Activated naive CD4-positive, alpha-beta T cell treated with anti-CD3 and anti-CD28 coated beads for 36 hours (primary cell): ENCODE measurements at regions of chr1 and their contacts with region 1.

Region 1: GRCh38 chr1:100423832-100424337 is 71.6 kb downstream of the CDC14A start:
- DNase-seq: no peak
- H3K4me3 Mint-ChIP-seq: peak overlapping the region; percentile 36
- H3K27ac Mint-ChIP-seq: peak overlapping the region; percentile 59
- H3K4me1 Mint-ChIP-seq: peaks cover 63% of the 10 kb centered on the region
- H3K27me3 Mint-ChIP-seq: no peaks in the 10 kb centered on the region

Region 2: DNA sequence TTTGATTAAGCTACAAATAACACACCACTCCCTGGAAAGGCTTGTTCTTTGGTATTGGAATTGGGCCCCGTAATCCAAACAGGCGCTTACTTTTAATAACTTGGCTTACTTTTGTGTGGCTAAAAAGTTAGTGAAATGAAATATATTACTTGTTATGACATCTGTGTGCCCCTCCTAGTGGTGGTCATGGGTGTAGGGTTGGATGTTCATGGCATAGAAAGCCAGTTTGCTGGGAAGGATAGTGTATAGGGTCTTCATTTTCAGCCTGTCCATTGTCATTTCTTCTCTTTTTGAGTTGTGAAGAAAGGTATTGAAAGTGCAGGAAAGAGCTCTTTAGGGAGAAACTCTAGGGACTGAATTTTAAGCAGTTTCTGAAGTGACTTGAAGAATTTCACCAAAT is 65.7 kb before region 1 on chr1:
- CTCF ChIA-PET with region 1: interaction called, 19 read pairs
- intact Hi-C with region 1: no loop called
- DNase-seq: peak; percentile 46
- H3K4me3 Mint-ChIP-seq: no peak overlapping the region
- H3K27ac Mint-ChIP-seq: no peak overlapping the region
- H3K4me1 Mint-ChIP-seq: peaks cover 81% of the 10 kb centered on the region
- H3K27me3 Mint-ChIP-seq: no peaks in the 10 kb centered on the region

Region 3: DNA sequence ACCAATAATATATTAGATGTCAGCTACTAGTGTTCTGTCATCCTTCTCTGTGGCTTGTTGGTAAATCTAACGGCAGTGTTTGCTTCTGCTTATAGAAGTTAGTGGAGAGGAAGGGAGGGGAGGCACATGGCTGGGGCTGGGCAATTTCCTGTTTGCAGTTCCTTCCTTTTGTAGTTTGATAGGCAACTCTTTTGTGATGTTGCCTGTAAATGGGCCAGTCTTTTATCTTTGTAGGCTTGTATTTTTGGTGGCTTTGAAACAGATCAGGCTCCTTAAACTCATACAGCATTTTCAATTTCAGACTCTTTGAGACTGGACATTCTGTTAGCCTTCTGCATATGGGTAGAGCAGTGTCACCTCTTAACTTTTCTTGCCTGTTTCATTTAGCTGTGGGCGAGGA is 23.5 kb before region 1 on chr1:
- CTCF ChIA-PET with region 1: interaction called, 6 read pairs
- intact Hi-C with region 1: loop called (anchors 1 kb)
- DNase-seq: peak; percentile 73
- H3K4me3 Mint-ChIP-seq: peak overlapping the region; percentile 60
- H3K27ac Mint-ChIP-seq: peak overlapping the region; percentile 94
- H3K4me1 Mint-ChIP-seq: peaks cover 75% of the 10 kb centered on the region
- H3K27me3 Mint-ChIP-seq: no peaks in the 10 kb centered on the region

Region 4: DNA sequence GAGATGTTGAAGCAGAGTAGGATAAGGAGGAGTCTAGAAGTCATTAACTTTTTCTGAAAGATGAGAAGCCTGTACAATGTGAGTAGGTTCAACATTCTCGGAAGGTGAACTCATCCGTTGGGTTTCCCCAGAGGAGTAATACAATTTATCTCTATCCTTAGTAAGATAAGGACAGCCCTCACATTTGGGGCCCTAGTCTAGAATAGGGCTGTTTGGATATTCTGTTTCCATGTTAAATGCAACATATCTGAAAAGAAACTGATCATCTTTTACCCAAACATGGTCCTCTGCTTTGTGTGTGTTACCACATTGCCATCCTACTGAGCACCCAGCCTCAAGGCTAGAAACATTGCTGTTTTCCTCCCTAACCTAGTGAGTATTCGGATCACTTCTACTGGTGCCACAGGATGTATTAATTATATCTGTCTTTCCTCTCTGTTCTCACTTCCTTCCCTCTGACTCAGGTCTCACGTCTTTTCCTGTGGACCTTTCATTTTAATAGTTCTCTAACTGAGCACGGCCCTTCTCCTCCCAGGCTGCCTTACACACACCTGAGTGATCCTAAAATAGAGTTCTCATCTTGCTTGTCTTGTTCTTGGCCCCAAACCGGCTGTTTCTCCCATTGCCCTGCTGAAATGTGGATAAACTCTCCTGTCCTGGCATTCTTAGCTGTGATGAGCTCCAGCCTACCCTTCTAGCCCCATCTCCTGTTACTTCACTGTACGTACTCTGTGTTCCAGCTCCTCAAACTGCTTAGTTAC is 20.1 kb after region 1 on chr1:
- CTCF ChIA-PET with region 1: interaction called, 4 read pairs
- intact Hi-C with region 1: loop called (anchors 1 kb)
- DNase-seq: peak; percentile 53
- H3K4me3 Mint-ChIP-seq: peak overlapping the region; percentile 72
- H3K27ac Mint-ChIP-seq: peak overlapping the region; percentile 96
- H3K4me1 Mint-ChIP-seq: peaks cover 85% of the 10 kb centered on the region
- H3K27me3 Mint-ChIP-seq: no peaks in the 10 kb centered on the region

Region 5: GRCh38 chr1:100449477-100449876 is 25.6 kb after region 1 on chr1:
- CTCF ChIA-PET with region 1: interaction called, 13 read pairs
- intact Hi-C with region 1: loop called (anchors 1 kb)
- DNase-seq: peak; percentile 61
- H3K4me3 Mint-ChIP-seq: peak overlapping the region; percentile 9
- H3K27ac Mint-ChIP-seq: peak overlapping the region; percentile 79
- H3K4me1 Mint-ChIP-seq: peaks cover 87% of the 10 kb centered on the region
- H3K27me3 Mint-ChIP-seq: no peaks in the 10 kb centered on the region